ENCODE measurements at regions of chr1 and their contacts with region 1.

Region 1: GRCh38 chr1:198520524-198521254 is 19.8 kb downstream of the ATP6V1G3 start:
- DNase-seq: no peak
- H3K4me3 ChIP-seq: no peak overlapping the region
- H3K27ac ChIP-seq: no peak overlapping the region
- H3K4me1 ChIP-seq: no peaks in the 10 kb centered on the region
- H3K27me3 ChIP-seq: no peaks in the 10 kb centered on the region
- CTCF ChIP-seq: no peak

Region 2: GRCh38 chr1:198307411-198307810 is 213.3 kb before region 1 on chr1:
- CTCF ChIA-PET with region 1: no interaction called
- dilution Hi-C with region 1: no loop called
- in situ Hi-C with region 1: no loop called
- intact Hi-C with region 1: no loop called
- DNase-seq: no peak
- H3K4me3 ChIP-seq: no peak overlapping the region
- H3K27ac ChIP-seq: no peak overlapping the region
- H3K4me1 ChIP-seq: peaks cover 5% of the 10 kb centered on the region
- H3K27me3 ChIP-seq: no peaks in the 10 kb centered on the region
- CTCF ChIP-seq: no peak

Region 3: GRCh38 chr1:198549866-198550265 is 29.2 kb after region 1 on chr1:
- CTCF ChIA-PET with region 1: no interaction called
- dilution Hi-C with region 1: no loop called
- in situ Hi-C with region 1: no loop called
- intact Hi-C with region 1: no loop called
- DNase-seq: no peak
- H3K4me3 ChIP-seq: no peak overlapping the region
- H3K27ac ChIP-seq: no peak overlapping the region
- H3K4me1 ChIP-seq: no peaks in the 10 kb centered on the region
- H3K27me3 ChIP-seq: no peaks in the 10 kb centered on the region
- CTCF ChIP-seq: no peak

Region 4: DNA sequence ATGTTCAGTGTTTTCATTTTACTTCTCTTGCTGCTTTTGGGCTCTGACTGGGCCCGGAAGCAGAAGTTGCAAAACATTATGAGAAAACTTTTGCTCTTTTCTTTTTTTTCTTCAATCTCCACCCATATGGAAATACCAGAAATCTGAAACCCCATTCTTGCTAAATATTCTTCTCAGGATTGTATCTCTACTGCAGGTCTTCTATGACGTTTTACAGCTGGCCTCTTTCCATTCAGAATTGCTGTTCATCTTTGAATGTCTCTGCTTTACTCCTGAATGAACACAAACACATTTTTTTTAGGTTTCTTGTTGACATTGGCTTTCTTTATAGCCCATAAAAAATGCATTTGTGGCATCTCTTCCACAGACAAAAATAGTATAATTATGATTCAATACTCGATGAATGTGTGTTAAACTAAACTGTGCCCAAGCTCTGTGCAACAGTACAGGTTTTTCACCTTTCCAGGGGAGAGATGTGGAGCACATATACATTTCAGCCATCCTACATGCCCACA is 136.9 kb after region 1 on chr1:
- CTCF ChIA-PET with region 1: no interaction called
- dilution Hi-C with region 1: no loop called
- in situ Hi-C with region 1: loop called in 1 of 2 experiments (anchors 10 kb)
- intact Hi-C with region 1: no loop called
- DNase-seq: peak; percentile 90
- H3K4me3 ChIP-seq: no peak overlapping the region
- H3K27ac ChIP-seq: no peak overlapping the region
- H3K4me1 ChIP-seq: no peaks in the 10 kb centered on the region
- H3K27me3 ChIP-seq: no peaks in the 10 kb centered on the region
- CTCF ChIP-seq: no peak

Measured in mammary epithelial cell (primary cell).